PC-9 (cell line): ENCODE measurements at regions of chr5 and their contacts with region 1.

Region 1: DNA sequence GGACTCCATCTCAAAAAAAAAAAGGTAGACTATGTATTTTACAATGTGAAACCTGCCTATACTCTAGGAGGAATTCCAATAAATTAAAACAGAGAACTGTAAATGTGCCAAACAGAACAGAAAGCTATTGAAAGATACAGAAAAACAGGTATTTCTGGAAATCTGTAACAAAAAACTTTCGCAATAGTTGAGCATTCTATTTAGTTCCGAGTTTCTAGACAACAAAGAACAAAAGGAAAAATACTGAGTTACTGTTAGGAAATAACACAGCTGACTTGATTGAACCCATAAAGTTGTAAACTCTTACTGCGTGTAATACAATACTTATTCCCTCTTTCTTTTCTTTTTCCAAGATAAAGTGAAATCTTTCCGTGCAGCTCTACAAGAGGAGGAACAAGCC is 18.6 kb downstream of the DIMT1 start:
- DNase-seq: peak in 1 of 2 experiments; percentile 86
- H3K4me3 ChIP-seq: no peak overlapping the region
- H3K27ac ChIP-seq: peak overlapping the region; percentile 67
- H3K4me1 ChIP-seq: peaks cover 23% of the 10 kb centered on the region
- H3K27me3 ChIP-seq: no peaks in the 10 kb centered on the region
- CTCF ChIP-seq: no peak

Region 2: DNA sequence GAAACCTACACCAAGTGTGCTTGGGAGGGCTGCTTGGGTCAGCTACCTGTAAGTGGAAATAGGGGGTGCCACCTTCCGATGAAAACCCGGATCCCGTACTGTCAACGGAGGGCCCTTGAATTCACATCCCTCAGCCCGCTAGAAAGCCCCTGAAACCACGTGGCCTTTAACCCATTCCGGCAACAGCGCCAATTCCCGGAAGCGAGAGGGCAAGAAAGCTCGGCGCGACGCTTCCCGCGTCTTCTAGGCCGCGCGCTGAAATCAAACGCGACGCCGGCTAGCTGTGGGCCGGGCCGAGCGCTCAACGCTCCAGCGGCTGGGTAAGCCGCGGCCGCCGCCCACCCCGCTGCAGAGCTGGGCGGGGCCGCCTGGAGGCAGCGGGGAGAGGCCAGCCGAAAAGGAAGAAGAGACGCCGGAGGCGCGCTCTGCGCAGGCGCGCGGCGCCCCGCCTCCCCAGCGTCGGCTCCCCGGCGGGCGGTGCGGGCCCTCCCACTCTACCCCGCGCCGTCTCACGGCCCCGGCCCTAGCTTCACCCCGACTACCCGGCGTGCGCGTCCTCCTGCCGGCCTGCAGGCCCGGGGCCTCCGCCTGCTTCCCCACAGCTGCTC is 79.3 kb before region 1 on chr5 and contains the start of gene KIF2A:
- CTCF ChIA-PET with region 1: no interaction called
- POLR2A ChIA-PET with region 1: no interaction called
- intact Hi-C with region 1: loop called (anchors 5 kb)
- DNase-seq: peak; percentile 81 to 93
- H3K4me3 ChIP-seq: peak within 1 kb of the TSS; percentile 91
- H3K27ac ChIP-seq: peak within 1 kb of the TSS; percentile 51
- H3K4me1 ChIP-seq: 0 out of 2 replicates have a peak, but pooled peaks cover 7% of the 10 kb centered on the region
- H3K27me3 ChIP-seq: no peaks in the 10 kb centered on the region
- CTCF ChIP-seq: no peak
- total RNA-seq, gene KIF2A: 39.6 and 54.8 TPM in 2 replicates

Region 3: GRCh38 chr5:62326302-62326701 is 58.8 kb before region 1 on chr5:
- CTCF ChIA-PET with region 1: no interaction called
- POLR2A ChIA-PET with region 1: interaction called, 20 read pairs
- intact Hi-C with region 1: no loop called
- DNase-seq: no peak
- H3K4me3 ChIP-seq: no peak overlapping the region
- H3K27ac ChIP-seq: no peak overlapping the region
- H3K4me1 ChIP-seq: no peaks in the 10 kb centered on the region
- H3K27me3 ChIP-seq: no peaks in the 10 kb centered on the region
- CTCF ChIP-seq: no peak

Region 4: DNA sequence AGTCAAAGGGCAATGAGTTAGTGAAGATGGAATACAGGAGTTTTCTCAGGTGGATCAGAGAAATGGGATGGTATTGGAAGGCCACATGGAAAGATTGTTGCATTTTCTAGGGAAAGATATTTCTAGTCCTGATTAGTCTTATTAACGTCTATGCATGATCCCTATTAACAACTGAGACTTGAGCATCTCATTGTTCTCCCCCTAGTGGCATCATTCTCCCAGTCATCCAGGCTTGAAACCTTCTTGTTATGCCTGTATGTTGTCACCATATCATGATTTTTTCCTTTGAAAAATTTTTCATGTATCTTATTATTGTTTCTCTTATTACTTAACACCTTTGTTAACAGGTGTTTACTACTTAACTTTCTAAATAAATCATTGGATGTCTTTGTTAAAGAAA is 44.7 kb before region 1 on chr5:
- CTCF ChIA-PET with region 1: no interaction called
- POLR2A ChIA-PET with region 1: no interaction called
- intact Hi-C with region 1: no loop called
- DNase-seq: no peak
- H3K4me3 ChIP-seq: no peak overlapping the region
- H3K27ac ChIP-seq: no peak overlapping the region
- H3K4me1 ChIP-seq: no peaks in the 10 kb centered on the region
- H3K27me3 ChIP-seq: no peaks in the 10 kb centered on the region
- CTCF ChIP-seq: peak; percentile 45

Region 5: DNA sequence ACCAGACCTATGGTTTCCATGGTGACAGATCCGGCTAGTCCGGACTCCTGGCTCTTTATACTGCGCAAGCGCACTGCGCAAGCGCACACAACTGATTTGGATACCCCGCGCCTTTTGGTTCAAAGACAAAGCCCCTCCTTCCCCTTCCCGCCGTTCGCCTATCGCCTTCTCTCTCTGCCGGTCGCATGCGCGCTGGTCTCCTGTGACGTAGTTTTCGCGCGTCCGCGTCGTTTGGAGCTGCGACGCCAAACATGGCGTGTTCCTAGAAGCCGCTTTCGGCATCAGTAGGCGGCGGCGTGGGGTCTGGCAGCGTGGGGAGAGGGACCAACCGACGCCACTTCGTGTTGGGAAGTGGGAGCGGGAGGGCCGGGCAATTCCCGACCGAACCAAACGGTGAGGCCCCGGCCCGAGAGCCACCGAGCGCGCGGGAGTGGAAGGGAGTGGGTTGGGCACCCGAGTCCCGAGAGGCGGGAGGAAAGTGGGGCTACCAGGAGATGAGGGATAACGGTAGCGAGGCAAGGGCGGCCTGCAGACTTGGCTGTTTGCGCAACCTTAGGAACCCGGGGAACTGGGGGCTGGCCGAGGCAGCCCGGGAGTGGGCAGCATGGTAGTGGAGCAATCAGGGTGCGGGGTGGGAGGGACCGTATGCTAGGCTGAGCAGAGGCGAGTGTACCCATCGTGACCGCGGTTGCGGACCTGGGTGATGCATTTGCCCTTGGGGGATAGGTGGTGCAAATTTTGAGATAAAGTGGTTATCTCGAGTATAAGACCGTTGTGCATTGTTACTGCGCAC is 27.6 kb after region 1 on chr5 and contains the start of gene IPO11:
- CTCF ChIA-PET with region 1: no interaction called
- POLR2A ChIA-PET with region 1: no interaction called
- intact Hi-C with region 1: loop called (anchors 1 kb)
- DNase-seq: peak; percentile 96
- H3K4me3 ChIP-seq: peak within 1 kb of the TSS; percentile 88
- H3K27ac ChIP-seq: peak within 1 kb of the TSS; percentile 33; the same call in 1 of the 2 replicates
- H3K4me1 ChIP-seq: peaks cover 17% of the 10 kb centered on the region
- H3K27me3 ChIP-seq: no peaks in the 10 kb centered on the region
- CTCF ChIP-seq: no peak
- total RNA-seq, gene IPO11: 37.1 and 47.1 TPM in 2 replicates

Region 6: GRCh38 chr5:62606878-62607277 is 221.7 kb after region 1 on chr5:
- CTCF ChIA-PET with region 1: no interaction called
- POLR2A ChIA-PET with region 1: no interaction called
- intact Hi-C with region 1: no loop called
- DNase-seq: no peak
- H3K4me3 ChIP-seq: no peak overlapping the region
- H3K27ac ChIP-seq: no peak overlapping the region
- H3K4me1 ChIP-seq: no peaks in the 10 kb centered on the region
- H3K27me3 ChIP-seq: no peaks in the 10 kb centered on the region
- CTCF ChIP-seq: no peak

Region 7: DNA sequence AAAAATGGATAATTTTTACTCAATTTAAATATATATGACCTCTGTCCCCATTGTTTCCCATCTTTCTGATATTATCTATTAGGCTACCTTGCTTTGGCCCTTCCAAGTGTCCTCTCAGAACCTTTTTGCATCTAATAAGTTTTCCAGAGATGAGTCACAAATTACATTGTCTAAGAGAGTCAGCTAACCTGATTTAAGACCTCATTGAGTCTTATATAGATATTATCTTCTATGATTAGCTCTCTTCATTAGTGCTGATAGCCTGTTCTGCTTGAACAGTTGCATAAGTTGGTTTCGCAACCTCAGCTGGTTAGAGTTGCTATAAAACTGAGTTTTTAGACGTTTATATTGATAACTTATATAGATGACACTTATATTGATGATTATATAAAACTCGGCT is 816.6 kb after region 1 on chr5:
- CTCF ChIA-PET with region 1: no interaction called
- POLR2A ChIA-PET with region 1: no interaction called
- intact Hi-C with region 1: no loop called
- DNase-seq: no peak
- H3K4me3 ChIP-seq: no peak overlapping the region
- H3K27ac ChIP-seq: no peak overlapping the region
- H3K4me1 ChIP-seq: no peaks in the 10 kb centered on the region
- H3K27me3 ChIP-seq: no peaks in the 10 kb centered on the region
- CTCF ChIP-seq: no peak